B cell (primary cell): ENCODE measurements at regions of chr7 and their contacts with region 1.

Region 1: GRCh38 chr7:131231381-131232220 is 96.1 kb upstream of the MKLN1 start:
- DNase-seq: peak; percentile 75
- ATAC-seq: peak; percentile 76
- H3K4me3 ChIP-seq: peak overlapping the region; percentile 36 to 66 (median 44)
- H3K4me3 Mint-ChIP-seq: peak overlapping the region; percentile 86
- H3K27ac ChIP-seq: peak overlapping the region; percentile 66 to 77
- H3K27ac Mint-ChIP-seq: peak overlapping the region; percentile 90
- H3K4me1 ChIP-seq: peaks cover 6 to 11% of the 10 kb centered on the region in 2 donors
- H3K4me1 Mint-ChIP-seq: peaks cover 24% of the 10 kb centered on the region
- H3K27me3 ChIP-seq: no peaks in the 10 kb centered on the region
- H3K27me3 Mint-ChIP-seq: no peaks in the 10 kb centered on the region
- CTCF ChIP-seq: no peak

Region 2: DNA sequence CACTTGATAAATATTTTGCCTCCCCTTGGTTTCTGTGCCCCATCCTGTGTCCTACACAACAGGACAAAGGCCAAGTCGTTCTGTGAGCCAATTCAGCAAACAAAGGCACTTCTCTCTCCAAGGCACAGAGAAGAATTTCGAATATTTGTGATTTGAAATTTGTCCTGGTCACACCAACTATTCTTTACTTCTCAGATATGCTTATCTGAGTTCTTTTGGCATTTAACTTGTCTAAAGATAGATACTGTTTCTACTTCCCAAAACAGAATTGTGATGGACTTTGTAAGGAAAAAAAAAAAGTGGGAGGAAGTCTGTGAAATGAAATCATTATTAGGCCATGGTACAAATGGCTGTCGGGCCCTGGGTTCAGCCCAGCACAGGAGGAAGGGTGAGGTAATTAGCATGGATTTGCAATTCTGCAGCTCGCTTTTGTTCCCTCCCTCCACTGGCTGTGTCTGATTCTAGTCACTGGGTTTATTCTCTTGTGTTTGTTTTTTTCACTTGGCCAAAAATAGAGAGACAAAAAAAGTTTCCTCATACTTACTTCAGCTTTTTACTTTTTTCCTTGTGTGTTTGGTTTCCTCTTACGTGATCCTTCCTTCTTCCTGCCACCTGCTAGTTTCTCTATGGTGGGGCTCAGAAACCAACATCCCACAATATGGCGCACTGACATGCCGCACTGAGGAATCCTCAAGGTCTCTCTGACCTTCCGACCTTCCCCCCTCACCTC is 12.1 kb before region 1 on chr7:
- CTCF ChIA-PET with region 1: no interaction called
- POLR2A ChIA-PET with region 1: no interaction called
- intact Hi-C with region 1: loop called (anchors 1 kb)
- DNase-seq: peak; percentile 53
- ATAC-seq: peak; percentile 72
- H3K4me3 ChIP-seq: no peak overlapping the region
- H3K4me3 Mint-ChIP-seq: peak overlapping the region; percentile 42
- H3K27ac ChIP-seq: peak overlapping the region; percentile 26 to 73
- H3K27ac Mint-ChIP-seq: peak overlapping the region; percentile 83
- H3K4me1 ChIP-seq: peaks cover 23 to 25% of the 10 kb centered on the region in 2 donors
- H3K4me1 Mint-ChIP-seq: peaks cover 32% of the 10 kb centered on the region
- H3K27me3 ChIP-seq: no peaks in the 10 kb centered on the region
- H3K27me3 Mint-ChIP-seq: no peaks in the 10 kb centered on the region
- CTCF ChIP-seq: no peak

Region 3: GRCh38 chr7:131244259-131244852 is 12.8 kb after region 1 on chr7:
- CTCF ChIA-PET with region 1: no interaction called
- POLR2A ChIA-PET with region 1: no interaction called
- intact Hi-C with region 1: no loop called
- DNase-seq: no peak
- ATAC-seq: no peak
- H3K4me3 ChIP-seq: no peak overlapping the region
- H3K4me3 Mint-ChIP-seq: no peak overlapping the region
- H3K27ac ChIP-seq: no peak overlapping the region
- H3K27ac Mint-ChIP-seq: no peak overlapping the region
- H3K4me1 ChIP-seq: no peaks in the 10 kb centered on the region
- H3K4me1 Mint-ChIP-seq: no peaks in the 10 kb centered on the region
- H3K27me3 ChIP-seq: no peaks in the 10 kb centered on the region
- H3K27me3 Mint-ChIP-seq: peaks cover 6% of the 10 kb centered on the region
- CTCF ChIP-seq: no peak

Region 4: GRCh38 chr7:131327626-131328376 is 96.2 kb after region 1 on chr7 and contains the start of gene MKLN1:
- CTCF ChIA-PET with region 1: no interaction called
- POLR2A ChIA-PET with region 1: interaction called, 3 read pairs
- intact Hi-C with region 1: loop called (anchors 1 kb)
- DNase-seq: peak; percentile 93
- ATAC-seq: peak; percentile 97
- H3K4me3 ChIP-seq: peak within 1 kb of the TSS; percentile 93 to 99 (median 96)
- H3K4me3 Mint-ChIP-seq: peak within 1 kb of the TSS; percentile 85
- H3K27ac ChIP-seq: peak within 1 kb of the TSS; percentile 88 to 91
- H3K27ac Mint-ChIP-seq: peak within 1 kb of the TSS; percentile 95
- H3K4me1 ChIP-seq: peaks cover 26 to 29% of the 10 kb centered on the region in 2 donors
- H3K4me1 Mint-ChIP-seq: peaks cover 62% of the 10 kb centered on the region
- H3K27me3 ChIP-seq: no peaks in the 10 kb centered on the region
- H3K27me3 Mint-ChIP-seq: no peaks in the 10 kb centered on the region
- CTCF ChIP-seq: no peak
- total RNA-seq, gene MKLN1: 68.4 and 73.6 TPM in 2 replicates